Keratinocyte (primary cell): ENCODE measurements at regions of chr1 and their contacts with region 1.

Region 1: GRCh38 chr1:112715264-112716053 is at the start of gene PPM1J:
- DNase-seq: peak; percentile 71
- H3K4me3 ChIP-seq: peak within 1 kb of the TSS; percentile 69 to 89 (median 83)
- H3K27ac ChIP-seq: peak within 1 kb of the TSS; percentile 75
- H3K4me1 ChIP-seq: peaks cover 8% of the 10 kb centered on the region
- H3K27me3 ChIP-seq: no peaks in the 10 kb centered on the region
- CTCF ChIP-seq: no peak
- polyA plus RNA-seq, gene PPM1J: 7.7 to 14.2 TPM (median 7.7 TPM) in 3 replicates

Region 2: DNA sequence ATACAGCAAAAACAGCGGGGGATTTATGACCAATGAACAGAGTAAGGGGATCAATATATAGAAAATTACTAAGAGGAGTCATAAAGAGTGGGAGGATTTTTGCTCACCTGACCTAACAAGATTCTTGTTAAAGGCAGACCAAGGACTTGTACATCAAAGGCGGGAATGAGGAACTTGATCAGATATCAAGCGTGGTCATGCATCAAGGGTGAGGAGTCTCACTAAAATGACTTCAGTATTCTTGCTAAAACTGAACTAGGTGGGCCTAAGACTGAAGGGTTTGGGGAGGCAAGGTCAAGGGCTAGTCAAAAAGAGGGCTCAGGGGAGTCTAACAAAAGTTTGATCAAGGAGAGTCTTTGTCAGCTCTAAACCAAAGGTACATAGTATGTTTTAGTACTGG is 38.9 kb before region 1 on chr1:
- dilution Hi-C with region 1: no loop called
- DNase-seq: no peak
- H3K4me3 ChIP-seq: no peak overlapping the region
- H3K27ac ChIP-seq: no peak overlapping the region
- H3K4me1 ChIP-seq: peaks cover 20% of the 10 kb centered on the region
- H3K27me3 ChIP-seq: no peaks in the 10 kb centered on the region
- CTCF ChIP-seq: no peak

Region 3: GRCh38 chr1:112779665-112780526 is 64.4 kb after region 1 on chr1:
- dilution Hi-C with region 1: loop called (anchors 5 kb)
- DNase-seq: no peak
- H3K4me3 ChIP-seq: no peak overlapping the region
- H3K27ac ChIP-seq: no peak overlapping the region
- H3K4me1 ChIP-seq: no peaks in the 10 kb centered on the region
- H3K27me3 ChIP-seq: no peaks in the 10 kb centered on the region
- CTCF ChIP-seq: no peak

Region 4: DNA sequence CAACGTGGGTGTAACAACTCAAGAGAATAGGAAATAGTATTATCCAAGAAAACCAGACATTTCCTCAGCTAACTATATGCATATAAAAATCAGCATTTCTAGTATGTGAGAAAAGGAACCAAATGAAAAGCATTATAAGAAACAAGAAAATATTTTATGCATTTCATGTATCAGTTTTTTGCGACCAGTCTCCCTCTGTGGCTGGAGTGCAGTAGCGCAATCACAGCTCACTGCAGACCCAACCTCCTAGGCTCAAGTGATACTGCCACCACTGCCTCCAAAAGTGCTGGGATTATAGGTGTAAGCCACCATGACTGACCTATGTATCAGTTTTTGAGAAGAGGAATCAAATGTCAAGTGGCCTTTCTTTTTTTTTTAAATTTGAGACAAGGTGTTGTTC is 209.6 kb after region 1 on chr1:
- dilution Hi-C with region 1: no loop called
- DNase-seq: no peak
- H3K4me3 ChIP-seq: no peak overlapping the region
- H3K27ac ChIP-seq: no peak overlapping the region
- H3K4me1 ChIP-seq: peaks cover 1% of the 10 kb centered on the region
- H3K27me3 ChIP-seq: no peaks in the 10 kb centered on the region
- CTCF ChIP-seq: no peak